ENCODE measurements at regions of chr12 and their contacts with region 1.

Region 1: GRCh38 chr12:107679336-107679735 is 6.3 kb upstream of the PWP1 start:
- DNase-seq: no peak
- ATAC-seq: no peak
- H3K4me3 Mint-ChIP-seq: no peak overlapping the region
- H3K27ac Mint-ChIP-seq: no peak overlapping the region
- H3K4me1 Mint-ChIP-seq: no peaks in the 10 kb centered on the region
- H3K27me3 Mint-ChIP-seq: peaks cover 11% of the 10 kb centered on the region
- CTCF ChIP-seq: no peak

Region 2: DNA sequence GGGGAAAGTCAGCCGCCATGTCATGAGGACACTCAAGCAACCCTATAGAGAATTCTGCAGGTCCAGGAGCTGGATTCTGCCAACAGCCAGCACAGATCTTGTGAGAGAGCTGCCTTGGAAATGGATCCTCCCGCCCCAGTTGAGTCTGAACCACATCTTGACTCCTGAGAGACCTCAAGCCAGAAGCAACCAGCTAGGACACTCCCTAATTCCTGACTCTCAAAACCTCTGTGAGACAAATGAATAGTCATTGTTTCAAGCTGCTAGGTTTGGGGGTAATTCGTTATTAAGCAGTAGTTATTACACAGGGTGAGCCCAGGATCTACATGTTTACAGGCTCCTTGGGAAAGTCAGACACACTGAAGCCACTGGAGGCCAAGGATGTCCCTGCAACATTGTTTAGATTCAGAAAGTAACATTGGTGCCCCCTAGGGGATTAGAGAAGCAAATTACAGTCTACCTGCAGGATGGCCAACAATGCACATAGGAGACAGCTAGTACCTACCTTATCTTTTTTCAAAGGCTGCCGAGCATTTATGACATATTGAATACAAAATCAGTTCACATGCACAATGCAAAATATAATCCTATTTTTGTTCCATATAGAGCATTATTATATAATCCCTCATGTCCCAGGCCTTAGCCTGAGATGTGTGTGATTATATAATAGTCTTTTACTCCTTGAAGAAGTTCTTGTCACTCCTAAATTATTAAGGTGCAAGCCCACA is 777.8 kb after region 1 on chr12:
- CTCF ChIA-PET with region 1: no interaction called
- POLR2A ChIA-PET with region 1: no interaction called
- intact Hi-C with region 1: loop called (anchors 5 kb)
- DNase-seq: no peak
- ATAC-seq: no peak
- H3K4me3 Mint-ChIP-seq: no peak overlapping the region
- H3K27ac Mint-ChIP-seq: no peak overlapping the region
- H3K4me1 Mint-ChIP-seq: no peaks in the 10 kb centered on the region
- H3K27me3 Mint-ChIP-seq: peaks cover 11% of the 10 kb centered on the region
- CTCF ChIP-seq: no peak